Sigmoid colon (tissue), 7 donors: ENCODE measurements at regions of chr12 and their contacts with region 1.

Region 1: GRCh38 chr12:39990122-39991101 is 115.5 kb downstream of the SLC2A13 start:
- DNase-seq: peak; percentile 70
- H3K4me3 ChIP-seq: no peak overlapping the region
- H3K27ac ChIP-seq: no peak overlapping the region
- H3K4me1 ChIP-seq: peaks cover 0 to 11% (median 5%) of the 10 kb centered on the region in 4 donors
- H3K27me3 ChIP-seq: no peaks in the 10 kb centered on the region
- CTCF ChIP-seq: peak; percentile 16 to 83 (median 66)
- EP300 ChIP-seq: no peak
- POLR2A ChIP-seq: no peak

Region 2: DNA sequence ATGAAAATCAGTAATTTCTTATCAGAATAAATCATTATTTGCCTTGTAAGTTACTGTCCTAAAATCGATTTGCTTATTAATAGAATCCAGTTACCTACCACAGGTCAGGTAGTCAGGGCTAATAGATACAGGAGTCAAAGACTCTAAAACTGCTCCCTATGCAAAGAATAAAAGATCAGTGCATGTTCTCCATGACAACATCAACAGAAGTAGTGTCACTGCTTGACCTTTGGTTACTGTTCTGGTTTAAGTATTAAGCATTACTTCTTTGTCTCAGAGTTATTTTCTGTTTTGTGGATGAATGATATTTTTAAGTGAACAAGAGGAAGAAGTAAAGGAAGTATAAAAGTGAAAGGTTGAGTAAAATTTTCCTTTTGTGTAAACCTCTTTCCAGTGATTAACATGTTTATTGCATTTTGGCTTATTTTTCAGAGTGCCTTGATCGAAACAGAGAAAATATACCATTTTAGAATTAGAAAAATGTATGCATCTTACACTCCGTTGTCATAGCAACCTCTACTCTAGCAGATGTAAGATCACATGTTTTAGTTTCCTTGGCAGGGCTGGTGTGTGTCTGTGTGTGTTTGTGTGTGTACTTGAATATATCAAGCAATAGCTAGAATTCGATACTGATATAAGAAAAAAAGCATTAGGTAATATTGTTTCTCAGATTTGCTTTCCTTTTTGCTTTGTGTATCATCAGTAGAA is 415.5 kb before region 1 on chr12:
- intact Hi-C with region 1: no loop called
- DNase-seq: no peak
- H3K4me3 ChIP-seq: no peak overlapping the region
- H3K27ac ChIP-seq: no peak overlapping the region
- H3K4me1 ChIP-seq: no peaks in the 10 kb centered on the region
- H3K27me3 ChIP-seq: no peaks in the 10 kb centered on the region
- CTCF ChIP-seq: no peak
- EP300 ChIP-seq: no peak
- POLR2A ChIP-seq: no peak

Region 3: GRCh38 chr12:39764944-39765560 is 225.4 kb before region 1 on chr12:
- intact Hi-C with region 1: loop called (anchors 2 kb)
- DNase-seq: no peak
- H3K4me3 ChIP-seq: no peak overlapping the region
- H3K27ac ChIP-seq: no peak overlapping the region
- H3K4me1 ChIP-seq: peaks cover 0 to 6% (median 0%) of the 10 kb centered on the region in 4 donors
- H3K27me3 ChIP-seq: no peaks in the 10 kb centered on the region
- CTCF ChIP-seq: peak; percentile 64 to 81 (median 74)
- EP300 ChIP-seq: no peak
- POLR2A ChIP-seq: no peak

Region 4: DNA sequence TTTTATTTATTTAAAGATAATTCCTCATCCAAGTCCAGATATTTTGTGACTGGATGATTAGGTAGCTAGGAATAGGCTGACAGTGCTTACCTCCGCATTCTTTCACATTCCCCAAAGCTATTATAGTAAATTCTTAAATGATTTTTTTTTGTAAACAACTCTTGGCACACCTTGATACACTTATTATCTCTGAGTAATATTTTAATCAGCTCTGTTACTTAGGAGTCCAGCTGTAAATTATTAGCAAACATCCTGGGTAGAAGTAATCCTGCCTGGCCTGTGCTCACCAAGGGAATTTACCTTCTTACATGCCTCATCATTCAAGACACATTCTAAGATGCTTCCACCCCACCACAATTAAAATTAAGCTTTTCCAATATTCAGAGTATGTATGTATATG is 70.6 kb before region 1 on chr12:
- intact Hi-C with region 1: no loop called
- DNase-seq: no peak
- H3K4me3 ChIP-seq: no peak overlapping the region
- H3K27ac ChIP-seq: no peak overlapping the region
- H3K4me1 ChIP-seq: peaks cover 0 to 5% (median 0%) of the 10 kb centered on the region in 4 donors
- H3K27me3 ChIP-seq: no peaks in the 10 kb centered on the region
- CTCF ChIP-seq: no peak
- EP300 ChIP-seq: no peak
- POLR2A ChIP-seq: no peak